Gastrocnemius medialis (tissue), 4 donors: ENCODE measurements at regions of chr10 and their contacts with region 1.

Region 1: GRCh38 chr10:6328699-6329423 is 126.1 kb downstream of the PFKFB3 start:
- DNase-seq: peak; percentile 76 to 85
- ATAC-seq: peak; percentile 99
- H3K4me3 ChIP-seq: peak overlapping the region; percentile 4 to 24 (median 22)
- H3K27ac ChIP-seq: peak overlapping the region; percentile 84 to 90 (median 87)
- H3K4me1 ChIP-seq: peaks cover 15 to 21% of the 10 kb centered on the region in 2 donors
- H3K27me3 ChIP-seq: no peaks in the 10 kb centered on the region
- CTCF ChIP-seq: no peak
- POLR2A ChIP-seq: no peak

Region 2: GRCh38 chr10:6275022-6275997 is 53.6 kb before region 1 on chr10:
- in situ Hi-C with region 1: no loop called
- intact Hi-C with region 1: loop called (anchors 5 kb)
- DNase-seq: peak; percentile 92 to 95
- ATAC-seq: peak; percentile 87 to 95
- H3K4me3 ChIP-seq: peak overlapping the region in 3 of 4 donors; percentile 7 to 40 (median 36)
- H3K27ac ChIP-seq: peak overlapping the region; percentile 75 to 82 (median 76)
- H3K4me1 ChIP-seq: peaks cover 3 to 5% of the 10 kb centered on the region in 2 donors
- H3K27me3 ChIP-seq: no peaks in the 10 kb centered on the region
- CTCF ChIP-seq: peak in 1 of 5 experiments; percentile 17
- POLR2A ChIP-seq: peak in 1 of 2 donors; percentile 14

Region 3: GRCh38 chr10:6348096-6348874 is 19.4 kb after region 1 on chr10:
- in situ Hi-C with region 1: no loop called
- intact Hi-C with region 1: no loop called
- DNase-seq: peak; percentile 22 to 64
- ATAC-seq: peak; percentile 61 to 88
- H3K4me3 ChIP-seq: peak overlapping the region in 3 of 4 donors; percentile 10 to 34 (median 17)
- H3K27ac ChIP-seq: peak overlapping the region in 2 of 4 donors; percentile 20 to 22
- H3K4me1 ChIP-seq: peaks cover 9 to 16% of the 10 kb centered on the region in 2 donors
- H3K27me3 ChIP-seq: no peaks in the 10 kb centered on the region
- CTCF ChIP-seq: no peak
- POLR2A ChIP-seq: no peak

Region 4: DNA sequence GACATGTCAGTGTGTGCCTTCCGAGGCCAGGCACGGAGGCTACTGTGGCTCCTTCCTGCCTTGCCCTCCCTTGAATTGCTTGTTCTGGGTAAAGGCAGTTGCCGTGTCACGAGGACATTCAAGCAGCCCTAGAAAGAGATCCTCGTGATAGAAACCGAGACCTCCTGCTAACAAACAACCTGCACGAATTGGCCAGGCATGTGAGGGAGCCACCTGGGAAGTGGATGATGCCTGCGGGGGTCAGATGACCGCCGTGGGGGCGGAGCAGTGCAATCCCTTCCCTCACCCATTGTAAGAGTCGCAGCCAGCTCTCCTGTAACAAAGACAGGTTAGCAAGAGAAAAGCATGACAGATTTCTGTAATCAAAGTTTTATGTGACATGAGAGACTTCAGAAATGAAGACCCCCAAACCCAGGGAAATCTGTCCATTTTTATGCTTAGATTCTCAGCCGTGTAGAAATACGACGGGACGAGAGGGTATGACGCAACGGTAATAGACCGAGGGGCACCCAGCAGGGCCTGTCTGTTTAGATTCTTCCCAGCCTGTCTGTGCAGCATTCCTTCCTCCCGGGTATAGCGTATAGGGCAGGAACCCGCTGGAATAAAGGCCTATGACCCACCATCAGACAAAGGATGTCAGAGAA is 1967.4 kb after region 1 on chr10:
- in situ Hi-C with region 1: no loop called
- intact Hi-C with region 1: no loop called
- DNase-seq: no peak
- ATAC-seq: no peak
- H3K4me3 ChIP-seq: no peak overlapping the region
- H3K27ac ChIP-seq: no peak overlapping the region
- H3K4me1 ChIP-seq: no peaks in the 10 kb centered on the region
- H3K27me3 ChIP-seq: no peaks in the 10 kb centered on the region
- CTCF ChIP-seq: no peak
- POLR2A ChIP-seq: no peak